Endothelial cell of umbilical vein (primary cell): ENCODE measurements at regions of chr1 and their contacts with region 1.

Region 1: GRCh38 chr1:171984850-171985485 is 143.7 kb downstream of the DNM3 start:
- DNase-seq: peak; percentile 36
- H3K4me3 ChIP-seq: no peak overlapping the region
- H3K27ac ChIP-seq: no peak overlapping the region
- H3K4me1 ChIP-seq: no peaks in the 10 kb centered on the region
- H3K27me3 ChIP-seq: no peaks in the 10 kb centered on the region
- CTCF ChIP-seq: peak; percentile 60 to 62
- POLR2A ChIP-seq: no peak

Region 2: GRCh38 chr1:171613282-171613681 is 371.7 kb before region 1 on chr1:
- CTCF ChIA-PET with region 1: no interaction called
- POLR2A ChIA-PET with region 1: no interaction called
- dilution Hi-C with region 1: no loop called
- intact Hi-C with region 1: no loop called
- DNase-seq: no peak
- H3K4me3 ChIP-seq: no peak overlapping the region
- H3K27ac ChIP-seq: no peak overlapping the region
- H3K4me1 ChIP-seq: no peaks in the 10 kb centered on the region
- H3K27me3 ChIP-seq: no peaks in the 10 kb centered on the region
- CTCF ChIP-seq: no peak
- POLR2A ChIP-seq: no peak

Region 3: DNA sequence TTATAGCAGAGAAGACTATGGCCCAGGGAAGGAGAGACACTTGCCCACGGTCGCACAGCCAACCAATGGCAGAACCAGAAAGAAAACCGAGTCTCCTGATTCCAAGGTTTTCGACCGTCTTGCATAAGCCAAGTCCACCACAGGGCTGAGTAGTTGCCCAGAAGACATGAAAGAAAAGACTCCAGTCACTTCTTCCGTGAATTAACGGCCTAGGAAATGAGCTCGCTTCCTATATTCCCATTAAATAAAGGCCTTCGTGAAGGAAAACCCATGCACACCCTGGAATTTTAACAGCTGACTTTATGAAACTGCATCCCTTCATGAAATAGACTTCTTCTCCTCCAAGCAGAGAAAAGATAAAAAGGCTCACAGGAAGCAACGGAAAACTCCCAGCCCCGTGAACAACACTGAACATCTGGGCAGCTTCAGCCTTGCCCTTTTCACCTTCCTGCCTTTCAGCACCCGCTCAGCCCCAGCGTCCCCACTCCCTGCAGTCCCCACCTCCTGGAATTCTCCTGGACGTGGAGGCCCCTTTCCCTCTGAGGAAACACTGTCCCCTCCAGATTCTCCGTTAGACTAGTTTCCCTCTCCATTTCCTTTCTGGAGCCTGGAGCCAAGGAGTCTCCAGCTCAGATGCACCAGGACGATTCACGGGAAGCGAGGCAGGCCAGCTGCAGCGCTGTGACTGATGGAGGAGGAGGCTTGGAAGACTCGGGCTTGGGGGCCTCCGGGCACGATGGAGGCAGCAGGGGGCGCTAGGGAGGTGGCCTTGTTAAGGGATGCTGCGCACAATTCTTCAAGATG is 329.8 kb before region 1 on chr1:
- CTCF ChIA-PET with region 1: interaction called, 15 read pairs
- POLR2A ChIA-PET with region 1: no interaction called
- dilution Hi-C with region 1: no loop called
- intact Hi-C with region 1: loop called (anchors 2 kb)
- DNase-seq: peak; percentile 72
- H3K4me3 ChIP-seq: no peak overlapping the region
- H3K27ac ChIP-seq: peak overlapping the region; percentile 63
- H3K4me1 ChIP-seq: peaks cover 17% of the 10 kb centered on the region
- H3K27me3 ChIP-seq: peaks cover 0 to 6% of the 10 kb centered on the region in 2 experiments
- CTCF ChIP-seq: peak; percentile 86 to 95
- POLR2A ChIP-seq: no peak

Region 4: GRCh38 chr1:171707583-171707982 is 277.4 kb before region 1 on chr1:
- CTCF ChIA-PET with region 1: no interaction called
- POLR2A ChIA-PET with region 1: no interaction called
- dilution Hi-C with region 1: no loop called
- intact Hi-C with region 1: no loop called
- DNase-seq: no peak
- H3K4me3 ChIP-seq: no peak overlapping the region
- H3K27ac ChIP-seq: no peak overlapping the region
- H3K4me1 ChIP-seq: no peaks in the 10 kb centered on the region
- H3K27me3 ChIP-seq: no peaks in the 10 kb centered on the region
- CTCF ChIP-seq: no peak
- POLR2A ChIP-seq: no peak

Region 5: DNA sequence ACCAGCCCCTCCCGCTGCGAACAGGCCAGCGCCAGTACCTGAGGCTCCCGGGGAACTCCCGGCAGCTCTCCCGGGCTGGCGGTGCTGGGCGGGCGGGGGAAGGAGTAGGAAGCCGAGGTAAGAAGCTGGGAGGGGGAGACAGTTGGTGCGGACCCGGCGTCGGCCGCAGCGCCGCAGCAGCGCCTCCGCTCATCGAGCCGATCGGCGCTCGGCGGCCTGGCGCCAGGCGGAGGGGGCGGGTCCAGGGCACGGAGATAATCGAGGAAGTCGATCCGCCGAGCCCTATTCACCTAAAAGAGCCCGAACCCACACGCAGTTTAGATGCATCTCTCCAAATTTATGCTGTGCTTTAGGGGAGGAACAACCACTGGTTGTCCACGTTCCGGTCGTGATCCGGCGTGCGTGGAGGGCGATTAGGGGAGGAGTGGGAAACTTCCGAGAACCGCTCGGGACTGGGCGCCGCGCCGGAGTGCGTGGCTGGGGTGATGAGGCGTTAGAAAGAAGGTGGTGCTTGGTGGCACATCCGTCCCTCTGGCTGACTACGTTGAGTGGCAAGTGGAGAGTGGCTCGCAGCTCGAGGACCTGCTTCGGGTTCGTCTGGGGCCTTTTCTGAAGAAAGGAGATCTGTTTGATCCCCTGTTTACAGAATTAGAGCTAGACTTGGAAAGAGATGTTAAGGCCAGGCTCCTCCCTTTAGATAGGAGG is 242.9 kb before region 1 on chr1 and contains the start of gene VAMP4:
- CTCF ChIA-PET with region 1: interaction called, 7 read pairs
- POLR2A ChIA-PET with region 1: no interaction called
- dilution Hi-C with region 1: no loop called
- intact Hi-C with region 1: loop called (anchors 1 kb)
- DNase-seq: peak; percentile 87
- H3K4me3 ChIP-seq: peak within 1 kb of the TSS; percentile 59 to 83 (median 81)
- H3K27ac ChIP-seq: peak within 1 kb of the TSS; percentile 57
- H3K4me1 ChIP-seq: peaks cover 31% of the 10 kb centered on the region
- H3K27me3 ChIP-seq: no peaks in the 10 kb centered on the region
- CTCF ChIP-seq: no peak
- POLR2A ChIP-seq: peak; percentile 60
- total RNA-seq, gene VAMP4: 10.1 and 10.4 TPM in 2 replicates

Region 6: GRCh38 chr1:171781176-171781875 is 203.6 kb before region 1 on chr1 and contains the start of gene METTL13:
- CTCF ChIA-PET with region 1: interaction called, 5 read pairs
- POLR2A ChIA-PET with region 1: no interaction called
- dilution Hi-C with region 1: loop called (anchors 25 kb)
- intact Hi-C with region 1: no loop called
- DNase-seq: peak; percentile 100
- H3K4me3 ChIP-seq: peak within 1 kb of the TSS; percentile 69 to 85 (median 81)
- H3K27ac ChIP-seq: peak within 1 kb of the TSS; percentile 66
- H3K4me1 ChIP-seq: peaks cover 7% of the 10 kb centered on the region
- H3K27me3 ChIP-seq: peaks cover 0 to 1% of the 10 kb centered on the region in 2 experiments
- CTCF ChIP-seq: no peak
- POLR2A ChIP-seq: peak; percentile 65
- total RNA-seq, gene METTL13: 26.5 and 29.7 TPM in 2 replicates

Region 7: GRCh38 chr1:171807556-171807955 is 177.4 kb before region 1 on chr1:
- CTCF ChIA-PET with region 1: interaction called, 538 read pairs
- POLR2A ChIA-PET with region 1: no interaction called
- dilution Hi-C with region 1: no loop called
- intact Hi-C with region 1: no loop called
- DNase-seq: no peak
- H3K4me3 ChIP-seq: no peak overlapping the region
- H3K27ac ChIP-seq: no peak overlapping the region
- H3K4me1 ChIP-seq: no peaks in the 10 kb centered on the region
- H3K27me3 ChIP-seq: no peaks in the 10 kb centered on the region
- CTCF ChIP-seq: no peak
- POLR2A ChIP-seq: no peak

Region 8: GRCh38 chr1:171929121-171929520 is 55.8 kb before region 1 on chr1:
- CTCF ChIA-PET with region 1: no interaction called
- POLR2A ChIA-PET with region 1: no interaction called
- dilution Hi-C with region 1: no loop called
- intact Hi-C with region 1: no loop called
- DNase-seq: no peak
- H3K4me3 ChIP-seq: no peak overlapping the region
- H3K27ac ChIP-seq: no peak overlapping the region
- H3K4me1 ChIP-seq: no peaks in the 10 kb centered on the region
- H3K27me3 ChIP-seq: no peaks in the 10 kb centered on the region
- CTCF ChIP-seq: peak in 1 of 2 donors; percentile 18
- POLR2A ChIP-seq: no peak